ENCODE measurements at regions of chr7 and their contacts with region 1.

Region 1: GRCh38 chr7:66641526-66641871 is 12.8 kb downstream of the KCTD7 start:
- DNase-seq: no peak
- H3K4me3 Mint-ChIP-seq: no peak overlapping the region
- H3K27ac Mint-ChIP-seq: no peak overlapping the region
- H3K4me1 Mint-ChIP-seq: peaks cover 4% of the 10 kb centered on the region
- H3K27me3 Mint-ChIP-seq: no peaks in the 10 kb centered on the region

Region 2: GRCh38 chr7:66631471-66631870 is 10.0 kb before region 1 on chr7:
- CTCF ChIA-PET with region 1: interaction called, 3 read pairs
- POLR2A ChIA-PET with region 1: interaction called, 12 read pairs
- DNase-seq: peak; percentile 34
- H3K4me3 Mint-ChIP-seq: peak overlapping the region; percentile 70
- H3K27ac Mint-ChIP-seq: peak overlapping the region; percentile 84
- H3K4me1 Mint-ChIP-seq: peaks cover 63% of the 10 kb centered on the region
- H3K27me3 Mint-ChIP-seq: peaks cover 4% of the 10 kb centered on the region

Measured in activated CD4-positive, alpha-beta T cell treated with anti-CD3 and anti-CD28 coated beads, Interleukin-2, amount 10 ng/mL, durations not matched to agents 7 days and 5 days (primary cell).